ENCODE measurements at regions of chr10 and their contacts with region 1.

Region 1: GRCh38 chr10:29392376-29393021 is 103.6 kb downstream of the LYZL1 start:
- DNase-seq: peak; percentile 58
- H3K4me3 Mint-ChIP-seq: no peak overlapping the region
- H3K27ac Mint-ChIP-seq: no peak overlapping the region
- H3K4me1 Mint-ChIP-seq: no peaks in the 10 kb centered on the region
- H3K27me3 Mint-ChIP-seq: no peaks in the 10 kb centered on the region

Region 2: GRCh38 chr10:29266641-29267040 is 125.9 kb before region 1 on chr10:
- CTCF ChIA-PET with region 1: no interaction called
- intact Hi-C with region 1: no loop called
- DNase-seq: no peak
- H3K4me3 Mint-ChIP-seq: no peak overlapping the region
- H3K27ac Mint-ChIP-seq: no peak overlapping the region
- H3K4me1 Mint-ChIP-seq: no peaks in the 10 kb centered on the region
- H3K27me3 Mint-ChIP-seq: peaks cover 10% of the 10 kb centered on the region

Region 3: DNA sequence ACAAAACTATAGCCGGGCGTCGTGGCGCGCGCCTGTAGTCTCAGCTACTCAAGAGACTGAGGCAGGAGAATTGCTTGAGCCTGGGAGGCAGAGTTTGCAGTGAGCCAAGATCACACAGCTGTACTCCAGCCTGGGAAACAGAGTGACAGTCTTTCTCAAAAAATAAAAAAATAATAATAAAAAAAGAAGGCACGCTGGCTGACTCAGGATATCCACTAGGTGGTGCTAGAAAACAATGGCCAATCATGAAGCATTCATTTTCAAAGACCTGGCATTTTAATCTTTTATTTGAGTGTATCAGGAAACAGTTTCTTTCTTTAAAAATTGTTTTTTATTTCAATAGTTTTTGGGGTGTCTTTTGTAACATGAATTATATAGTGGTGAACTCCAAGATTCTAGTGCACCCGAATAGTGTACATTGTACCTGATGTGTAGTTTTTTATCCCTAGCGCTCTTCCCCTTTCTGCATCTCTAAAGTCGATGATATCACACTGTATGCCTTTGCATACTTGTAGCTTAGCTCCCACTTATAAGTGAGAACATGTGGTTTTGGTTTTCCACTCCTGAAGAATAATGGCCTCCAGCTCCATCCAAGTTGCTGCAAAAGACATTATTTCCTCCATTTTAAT is 15.1 kb before region 1 on chr10:
- CTCF ChIA-PET with region 1: interaction called, 15 read pairs
- intact Hi-C with region 1: no loop called
- DNase-seq: peak; percentile 26
- H3K4me3 Mint-ChIP-seq: no peak overlapping the region
- H3K27ac Mint-ChIP-seq: no peak overlapping the region
- H3K4me1 Mint-ChIP-seq: peaks cover 8% of the 10 kb centered on the region
- H3K27me3 Mint-ChIP-seq: peaks cover 5% of the 10 kb centered on the region

Region 4: GRCh38 chr10:29646238-29646902 is 253.9 kb after region 1 on chr10:
- CTCF ChIA-PET with region 1: no interaction called
- intact Hi-C with region 1: no loop called
- DNase-seq: peak; percentile 47
- H3K4me3 Mint-ChIP-seq: no peak overlapping the region
- H3K27ac Mint-ChIP-seq: no peak overlapping the region
- H3K4me1 Mint-ChIP-seq: peaks cover 35% of the 10 kb centered on the region
- H3K27me3 Mint-ChIP-seq: peaks cover 3% of the 10 kb centered on the region